Gastrocnemius medialis (tissue), 4 donors: ENCODE measurements at regions of chr6 and their contacts with region 1.

Region 1: DNA sequence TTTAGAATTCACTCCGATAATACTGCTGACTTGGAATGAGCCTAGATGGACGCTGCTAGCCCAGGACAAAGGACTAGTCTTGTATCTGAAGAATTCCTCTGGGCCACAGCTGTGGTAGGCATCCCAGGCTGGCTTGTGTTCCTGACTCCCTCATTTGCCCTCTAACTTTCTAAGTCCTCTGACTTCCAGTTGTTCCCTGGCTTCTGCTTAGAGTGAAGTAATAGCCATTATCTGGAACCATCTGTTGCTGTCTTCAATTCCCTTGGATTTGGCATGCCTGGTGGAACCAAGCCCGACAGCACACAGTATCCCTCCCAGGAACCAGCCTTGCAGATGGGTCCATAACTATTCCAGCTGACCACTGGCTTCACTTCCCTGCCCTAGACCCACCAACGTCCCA is 376.0 kb downstream of the SYNE1 start:
- DNase-seq: peak; percentile 52 to 72
- ATAC-seq: peak; percentile 98 to 99
- H3K4me3 ChIP-seq: no peak overlapping the region
- H3K27ac ChIP-seq: peak overlapping the region; percentile 56 to 75 (median 68)
- H3K4me1 ChIP-seq: peaks cover 14 to 15% of the 10 kb centered on the region in 2 donors
- H3K27me3 ChIP-seq: no peaks in the 10 kb centered on the region
- CTCF ChIP-seq: no peak
- POLR2A ChIP-seq: no peak

Region 2: DNA sequence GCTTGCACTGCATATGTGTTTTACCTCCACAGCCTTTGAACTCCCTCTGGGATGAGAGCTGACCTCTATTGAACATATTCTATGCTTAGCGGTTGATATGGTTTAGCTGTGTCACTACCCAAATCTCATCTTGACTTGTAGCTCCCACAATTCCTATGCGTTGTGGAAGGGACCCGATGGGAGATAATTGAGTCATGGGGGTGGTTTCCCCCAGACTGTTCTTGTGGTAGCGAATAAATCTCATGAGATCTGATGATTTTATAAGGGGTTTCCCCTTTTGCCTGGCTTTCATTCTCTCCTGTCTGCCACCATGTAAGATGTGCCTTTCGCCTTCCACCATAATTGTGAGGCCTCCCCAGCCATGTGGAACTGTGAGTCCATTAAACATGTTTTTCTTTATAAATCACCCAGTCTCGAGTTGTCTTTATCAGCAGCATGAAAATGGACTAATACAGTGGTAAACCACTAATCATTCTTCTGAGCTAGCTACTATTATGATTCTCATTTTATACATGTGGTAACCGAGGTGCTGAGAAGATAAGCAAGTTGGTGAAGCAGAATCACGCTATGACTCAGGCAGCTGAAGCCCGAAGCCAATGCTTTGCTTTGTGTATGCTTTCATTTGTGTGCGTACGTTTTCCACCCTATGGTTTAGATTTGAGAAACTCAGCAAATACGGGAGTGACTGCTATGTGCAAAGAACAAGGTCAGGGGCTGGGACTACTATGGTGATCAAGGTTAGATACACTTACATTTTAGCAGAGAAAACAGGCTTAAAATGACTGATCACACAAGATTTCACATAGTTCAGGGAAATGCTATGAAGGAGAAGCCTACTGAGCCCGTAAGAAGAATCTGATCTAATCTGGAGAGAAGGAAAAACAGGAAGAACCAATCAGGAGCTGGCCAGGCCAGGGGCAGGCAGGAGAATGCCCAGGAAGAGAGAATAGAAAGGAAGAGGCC is 90.2 kb before region 1 on chr6:
- in situ Hi-C with region 1: no loop called
- intact Hi-C with region 1: loop called (anchors 5 kb)
- DNase-seq: no peak
- ATAC-seq: no peak
- H3K4me3 ChIP-seq: no peak overlapping the region
- H3K27ac ChIP-seq: peak overlapping the region; percentile 88 to 95 (median 92)
- H3K4me1 ChIP-seq: peaks cover 40 to 56% of the 10 kb centered on the region in 2 donors
- H3K27me3 ChIP-seq: no peaks in the 10 kb centered on the region
- CTCF ChIP-seq: no peak
- POLR2A ChIP-seq: no peak

Region 3: GRCh38 chr6:152246554-152247337 is 14.4 kb before region 1 on chr6:
- in situ Hi-C with region 1: no loop called
- intact Hi-C with region 1: loop called (anchors 2 kb)
- DNase-seq: no peak
- ATAC-seq: peak; percentile 92 to 97
- H3K4me3 ChIP-seq: peak overlapping the region in 3 of 4 donors; percentile 8 to 23 (median 17)
- H3K27ac ChIP-seq: peak overlapping the region; percentile 62 to 78 (median 75)
- H3K4me1 ChIP-seq: peaks cover 37 to 38% of the 10 kb centered on the region in 2 donors
- H3K27me3 ChIP-seq: no peaks in the 10 kb centered on the region
- CTCF ChIP-seq: no peak
- POLR2A ChIP-seq: no peak

Region 4: DNA sequence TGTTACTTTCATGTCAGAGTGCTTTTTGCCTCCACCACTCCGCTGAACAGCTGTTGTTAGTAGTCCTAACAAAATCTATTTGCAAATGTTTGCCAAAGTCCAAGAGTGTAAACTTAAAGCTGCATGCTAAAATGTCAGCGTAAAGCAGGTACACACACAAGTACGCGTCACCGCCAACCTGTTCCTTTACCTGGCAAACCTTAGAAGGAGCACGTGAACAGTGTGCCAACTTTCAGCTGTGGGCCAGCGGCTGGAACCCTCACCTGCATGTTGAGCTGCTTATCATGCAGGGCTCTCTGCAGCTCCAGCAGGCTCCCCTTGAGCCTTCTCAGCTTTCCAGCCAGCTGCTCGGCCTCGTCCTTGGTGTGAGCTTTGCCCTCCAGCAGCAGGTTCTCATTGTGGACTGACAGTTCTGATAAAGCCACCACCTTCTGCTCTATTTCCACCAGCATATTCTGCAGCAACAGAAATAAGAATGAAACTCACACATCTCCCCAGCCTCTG is 16.7 kb after region 1 on chr6:
- in situ Hi-C with region 1: no loop called
- intact Hi-C with region 1: no loop called
- DNase-seq: peak; percentile 48 to 84
- ATAC-seq: peak; percentile 79 to 92
- H3K4me3 ChIP-seq: peak overlapping the region in 1 of 4 donors; percentile 23
- H3K27ac ChIP-seq: peak overlapping the region; percentile 47 to 82 (median 65)
- H3K4me1 ChIP-seq: peaks cover 22 to 25% of the 10 kb centered on the region in 2 donors
- H3K27me3 ChIP-seq: no peaks in the 10 kb centered on the region
- CTCF ChIP-seq: no peak
- POLR2A ChIP-seq: no peak